HepG2 (cell line): ENCODE measurements at regions of chr2 and their contacts with region 1.

Region 1: DNA sequence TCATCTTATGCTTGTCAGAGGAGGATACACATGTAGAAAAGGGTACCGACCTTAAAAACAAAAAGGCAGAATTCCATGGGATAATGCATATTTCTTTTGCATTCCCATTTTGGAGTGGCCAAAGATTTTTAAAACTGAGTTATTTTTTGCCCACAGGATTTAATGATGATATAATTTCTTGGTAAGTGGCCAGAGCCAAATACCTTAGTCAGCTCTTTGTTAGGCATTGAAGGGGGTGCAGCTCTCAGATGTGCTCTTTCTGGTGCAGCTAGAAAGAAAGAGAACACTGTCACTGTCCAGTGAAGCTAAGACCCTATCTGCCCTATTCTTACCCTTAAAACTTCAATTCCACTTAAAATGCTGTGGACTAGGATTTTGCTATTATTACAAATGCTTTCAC is 10.8 kb downstream of the COQ10B start:
- DNase-seq: no peak
- ATAC-seq: no peak
- H3K4me3 ChIP-seq: no peak overlapping the region
- H3K27ac ChIP-seq: no peak overlapping the region
- H3K4me1 ChIP-seq: 0 out of 2 replicates have a peak, but pooled peaks cover 1% of the 10 kb centered on the region
- H3K27me3 ChIP-seq: no peaks in the 10 kb centered on the region
- CTCF ChIP-seq: no peak
- EP300 ChIP-seq: no peak
- POLR2A ChIP-seq: no peak
- RAD21 ChIP-seq: no peak

Region 2: GRCh38 chr2:197480165-197481036 is 16.2 kb after region 1 on chr2:
- CTCF ChIA-PET with region 1: no interaction called
- POLR2A ChIA-PET with region 1: interaction called, 11 read pairs
- in situ Hi-C with region 1: no loop called
- intact Hi-C with region 1: no loop called
- DNase-seq: no peak
- ATAC-seq: peak; percentile 32
- H3K4me3 ChIP-seq: peak overlapping the region; percentile 26 to 63 (median 38); a peak in 5 of 6 replicates
- H3K27ac ChIP-seq: peak overlapping the region; percentile 91
- H3K4me1 ChIP-seq: peaks cover 69% of the 10 kb centered on the region
- H3K27me3 ChIP-seq: no peaks in the 10 kb centered on the region
- CTCF ChIP-seq: no peak
- EP300 ChIP-seq: no peak
- POLR2A ChIP-seq: no peak
- RAD21 ChIP-seq: no peak